ENCODE measurements at regions of chr5 and their contacts with region 1.

Region 1: DNA sequence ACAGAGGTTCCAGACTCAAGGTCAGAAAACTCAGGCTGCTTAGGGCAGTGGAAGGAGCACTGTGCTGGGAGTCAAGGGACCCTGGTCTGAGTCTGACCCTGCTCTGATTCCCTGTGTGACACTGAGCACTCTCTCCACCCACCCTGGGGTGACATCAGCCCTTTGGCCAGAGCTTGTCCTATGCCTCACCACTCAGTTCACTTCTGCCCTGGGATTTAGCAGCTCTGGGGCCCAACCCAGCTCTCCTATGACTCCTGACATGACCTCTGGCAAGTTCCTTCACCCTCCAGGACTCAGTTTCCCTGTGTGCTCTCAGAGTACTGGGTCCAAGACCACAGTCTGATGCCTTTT is 63.9 kb downstream of the FAM114A2 start:
- ATAC-seq: peak in 7 of 8 experiments; percentile 4 to 47 (median 22)
- H3K4me3 ChIP-seq: no peak overlapping the region
- H3K27ac ChIP-seq: no peak overlapping the region
- H3K4me1 ChIP-seq: peaks cover 0 to 1% of the 10 kb centered on the region in 2 donors

Region 2: DNA sequence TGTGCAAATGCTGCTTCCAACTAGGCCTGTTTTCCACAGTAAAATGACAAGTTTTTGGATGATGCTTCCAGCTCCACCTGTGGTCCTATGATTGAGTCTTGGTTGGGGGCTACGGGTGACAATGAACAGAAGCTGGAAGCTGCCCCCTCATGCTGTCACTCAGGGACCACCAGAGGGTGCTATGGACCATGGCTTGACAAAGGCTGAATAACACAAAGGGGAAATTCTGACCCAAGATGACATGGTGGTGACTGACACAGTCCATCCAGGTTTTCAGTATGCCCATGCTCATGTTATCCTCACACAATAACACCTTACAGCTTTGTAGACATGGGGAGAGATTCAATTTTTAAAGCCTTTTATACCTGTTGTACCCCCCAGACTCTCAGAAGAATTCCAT is 447.1 kb after region 1 on chr5:
- in situ Hi-C with region 1: no loop called
- ATAC-seq: peak in 3 of 8 experiments; percentile 40 to 45 (median 42)
- H3K4me3 ChIP-seq: no peak overlapping the region
- H3K27ac ChIP-seq: no peak overlapping the region
- H3K4me1 ChIP-seq: peaks cover 7 to 11% of the 10 kb centered on the region in 2 donors

Region 3: DNA sequence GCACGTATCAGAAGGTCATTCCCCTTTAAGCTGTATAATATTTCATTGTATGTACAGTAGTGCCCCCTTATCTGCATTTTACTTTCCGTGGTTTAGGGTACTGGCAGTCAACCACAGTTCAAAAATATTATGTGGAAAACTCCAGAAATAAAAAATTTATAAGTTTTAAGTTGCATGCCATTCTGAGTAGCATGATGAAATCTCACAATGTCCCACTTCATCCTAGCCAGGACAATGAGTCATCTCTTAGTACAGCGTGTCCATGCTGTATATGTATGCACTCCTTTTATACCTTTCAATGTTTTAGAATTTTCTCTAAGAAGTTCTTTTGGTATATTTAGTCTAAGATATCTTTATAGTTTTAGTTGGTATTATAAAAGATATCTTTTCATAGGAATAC is 618.3 kb after region 1 on chr5:
- in situ Hi-C with region 1: no loop called
- ATAC-seq: peak in 3 of 8 experiments; percentile 54 to 64 (median 59)
- H3K4me3 ChIP-seq: no peak overlapping the region
- H3K27ac ChIP-seq: no peak overlapping the region
- H3K4me1 ChIP-seq: no peaks in the 10 kb centered on the region

Region 4: DNA sequence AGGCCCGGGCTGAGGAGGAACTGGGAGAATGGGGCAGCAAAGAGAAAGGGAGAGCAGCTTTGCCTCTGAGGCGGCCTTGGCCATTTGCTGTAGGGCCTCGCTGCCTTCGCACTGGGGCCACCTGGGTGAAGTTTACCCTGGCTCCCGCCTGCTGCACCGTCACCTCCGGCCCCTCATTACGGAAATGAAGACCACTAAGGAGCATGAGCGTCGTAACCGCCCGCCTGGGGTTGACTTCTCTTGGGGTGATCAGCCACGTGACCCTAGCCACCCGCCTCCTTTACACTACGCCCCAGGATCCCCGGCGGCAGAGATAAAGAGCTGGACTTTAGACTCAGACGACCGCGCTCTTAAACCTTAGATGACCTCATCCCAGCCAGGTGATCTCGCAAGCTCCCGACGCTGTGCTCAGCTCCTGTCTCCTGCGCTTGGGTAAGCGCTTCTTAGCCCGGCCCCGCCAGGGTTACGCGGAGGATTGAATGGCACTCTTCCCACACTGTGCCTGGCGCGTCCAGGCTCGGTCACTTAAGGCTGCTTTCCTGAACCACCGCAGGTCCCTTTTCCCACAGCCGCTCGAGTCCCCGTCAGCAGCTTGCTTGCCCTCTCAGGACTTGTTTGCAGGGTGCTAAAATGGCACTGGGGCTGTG is 672.4 kb after region 1 on chr5:
- in situ Hi-C with region 1: loop called in 2 of 9 experiments (anchors 25 kb)
- ATAC-seq: peak in 4 of 8 experiments; percentile 50 to 67 (median 62)
- H3K4me3 ChIP-seq: no peak overlapping the region
- H3K27ac ChIP-seq: no peak overlapping the region
- H3K4me1 ChIP-seq: no peaks in the 10 kb centered on the region